ENCODE measurements at regions of chr3 and their contacts with region 1.

Region 1: DNA sequence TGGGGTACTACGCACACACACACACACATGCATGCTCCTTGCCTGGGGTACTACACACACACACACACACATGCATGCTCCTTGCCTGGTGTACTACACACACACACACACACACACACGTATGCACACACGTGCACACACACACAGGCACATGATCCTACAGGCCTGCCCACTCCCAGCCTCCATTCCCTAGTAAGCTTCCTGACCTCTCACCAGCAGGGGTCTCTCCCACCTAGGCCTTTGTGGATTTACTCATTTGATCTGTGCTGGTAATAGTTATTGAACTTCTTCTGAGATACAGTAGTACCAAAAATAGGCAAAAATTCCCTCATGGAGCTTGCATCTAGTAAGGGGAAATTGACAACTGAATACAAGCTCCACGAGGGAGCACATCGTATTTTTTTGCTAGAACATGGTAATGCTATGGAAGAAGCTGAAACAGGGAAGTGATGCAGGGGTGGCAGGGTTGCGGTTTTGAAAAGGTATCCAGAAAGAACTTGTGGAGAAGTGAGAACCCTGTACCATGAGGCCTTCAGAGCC is 19.1 kb downstream of the TTC21A start:
- DNase-seq: peak; percentile 56
- ATAC-seq: peak; percentile 90
- H3K4me3 ChIP-seq: no peak overlapping the region
- H3K27ac ChIP-seq: no peak overlapping the region
- H3K4me1 ChIP-seq: peaks cover 13% of the 10 kb centered on the region
- H3K27me3 ChIP-seq: no peaks in the 10 kb centered on the region
- CTCF ChIP-seq: peak; percentile 89
- EP300 ChIP-seq: no peak
- POLR2A ChIP-seq: no peak
- RAD21 ChIP-seq: peak; percentile 79

Region 2: DNA sequence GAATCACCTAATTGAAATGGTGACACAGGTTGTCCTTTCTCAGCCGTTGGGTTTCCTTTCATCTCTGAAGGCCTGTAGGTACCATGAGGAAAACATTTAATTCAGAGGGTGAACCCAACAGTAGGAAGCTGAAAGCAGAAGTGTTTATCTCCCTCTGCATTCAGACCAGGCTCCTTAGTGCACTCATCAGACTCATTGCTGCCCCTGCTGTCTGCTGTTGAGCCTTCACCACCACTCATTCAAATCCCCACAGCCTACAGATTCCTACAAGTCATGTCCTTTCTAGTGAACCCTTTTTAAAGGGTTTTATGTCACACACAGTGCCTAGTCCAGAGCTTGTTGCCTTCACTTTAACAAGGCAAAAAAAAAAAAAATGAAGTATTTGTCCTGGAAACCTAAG is 61.4 kb before region 1 on chr3:
- CTCF ChIA-PET with region 1: no interaction called
- POLR2A ChIA-PET with region 1: no interaction called
- in situ Hi-C with region 1: no loop called
- intact Hi-C with region 1: no loop called
- DNase-seq: peak; percentile 29
- ATAC-seq: peak; percentile 98
- H3K4me3 ChIP-seq: no peak overlapping the region
- H3K27ac ChIP-seq: no peak overlapping the region
- H3K4me1 ChIP-seq: peaks cover 12% of the 10 kb centered on the region
- H3K27me3 ChIP-seq: no peaks in the 10 kb centered on the region
- CTCF ChIP-seq: peak; percentile 34
- EP300 ChIP-seq: no peak
- POLR2A ChIP-seq: no peak
- RAD21 ChIP-seq: no peak

Region 3: DNA sequence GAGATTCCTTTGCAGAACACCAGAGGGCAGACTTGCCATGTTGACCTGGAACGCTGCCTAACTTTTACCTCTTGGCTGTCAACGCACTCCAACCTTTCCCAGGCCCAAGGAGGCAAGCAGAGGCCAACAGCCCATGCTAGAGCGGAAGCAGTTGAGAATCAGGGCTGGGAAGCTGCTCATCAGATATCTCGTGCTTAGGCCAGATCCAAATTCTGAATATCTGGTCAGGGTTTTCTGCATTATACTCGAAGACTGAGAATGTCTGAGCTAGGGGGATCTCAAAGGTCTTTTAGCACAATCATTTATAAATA is 63.3 kb after region 1 on chr3:
- CTCF ChIA-PET with region 1: interaction called, 3 read pairs
- POLR2A ChIA-PET with region 1: no interaction called
- in situ Hi-C with region 1: loop called (anchors 5 kb)
- intact Hi-C with region 1: loop called (anchors 1 kb)
- DNase-seq: peak; percentile 52
- ATAC-seq: peak; percentile 75
- H3K4me3 ChIP-seq: no peak overlapping the region
- H3K27ac ChIP-seq: no peak overlapping the region
- H3K4me1 ChIP-seq: no peaks in the 10 kb centered on the region
- H3K27me3 ChIP-seq: peaks cover 3 to 28% of the 10 kb centered on the region in 2 experiments; a peak in 4 of 5 replicates
- CTCF ChIP-seq: peak; percentile 89
- EP300 ChIP-seq: no peak
- POLR2A ChIP-seq: no peak
- RAD21 ChIP-seq: peak; percentile 78

Region 4: GRCh38 chr3:39208463-39209055 is 82.0 kb after region 1 on chr3:
- CTCF ChIA-PET with region 1: no interaction called
- POLR2A ChIA-PET with region 1: no interaction called
- in situ Hi-C with region 1: no loop called
- intact Hi-C with region 1: loop called (anchors 5 kb)
- DNase-seq: peak; percentile 21
- ATAC-seq: peak; percentile 90
- H3K4me3 ChIP-seq: no peak overlapping the region
- H3K27ac ChIP-seq: no peak overlapping the region
- H3K4me1 ChIP-seq: no peaks in the 10 kb centered on the region
- H3K27me3 ChIP-seq: peaks cover 1 to 19% of the 10 kb centered on the region in 2 experiments; a peak in 4 of 5 replicates
- CTCF ChIP-seq: peak; percentile 68
- EP300 ChIP-seq: no peak
- POLR2A ChIP-seq: no peak
- RAD21 ChIP-seq: no peak

Measured in HepG2 (cell line).